ENCODE measurements at regions of chrX and their contacts with region 1.

Region 1: DNA sequence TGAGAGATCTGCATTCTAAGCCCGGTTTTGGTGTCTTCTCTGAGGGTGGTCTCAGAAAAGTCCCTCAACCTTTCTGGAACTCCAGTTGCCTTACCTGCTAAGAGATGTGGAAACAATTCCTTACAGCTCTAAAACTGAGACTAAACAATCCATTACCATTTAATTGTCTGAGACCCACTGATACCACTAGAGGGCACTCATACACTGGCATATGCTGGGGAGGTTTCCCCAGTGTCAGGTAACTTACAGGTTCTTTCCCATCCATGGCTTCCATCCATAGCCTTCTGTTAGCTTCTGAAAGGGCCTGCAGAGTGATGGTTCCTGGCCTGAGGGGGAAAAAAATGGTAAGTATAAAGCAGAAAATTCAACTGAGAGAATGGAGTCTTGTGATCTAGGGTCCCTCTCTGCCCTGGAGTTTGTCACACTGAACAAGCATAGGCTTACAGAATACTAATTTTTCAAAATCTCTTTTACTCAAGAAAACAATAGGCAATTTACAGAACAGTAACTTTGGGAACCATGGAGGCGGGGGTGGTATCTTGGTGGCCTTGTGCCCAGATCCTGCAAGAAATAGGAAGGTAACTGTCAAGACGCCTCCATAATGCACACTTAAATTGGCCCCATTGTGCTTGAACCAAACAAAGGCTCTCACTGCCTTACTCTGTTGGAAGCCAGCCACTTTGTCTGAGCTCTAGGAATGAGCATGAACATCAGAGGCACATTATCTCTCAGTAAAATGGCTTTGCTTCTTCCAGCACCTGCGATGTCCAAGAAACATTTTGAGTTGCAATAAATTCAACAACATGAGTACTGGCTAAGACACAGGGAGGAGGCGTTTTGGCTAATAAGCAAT is 236.1 kb downstream of the OPHN1 start:
- DNase-seq: peak; percentile 53
- H3K4me3 ChIP-seq: no peak overlapping the region
- H3K27ac ChIP-seq: no peak overlapping the region
- H3K4me1 ChIP-seq: peaks cover 15% of the 10 kb centered on the region
- H3K27me3 ChIP-seq: no peaks in the 10 kb centered on the region
- CTCF ChIP-seq: peak; percentile 37 to 57
- POLR2A ChIP-seq: no peak

Region 2: GRCh38 chrX:68183612-68184214 is 13.5 kb before region 1 on chrX:
- CTCF ChIA-PET with region 1: interaction called, 32 read pairs
- POLR2A ChIA-PET with region 1: no interaction called
- dilution Hi-C with region 1: no loop called
- intact Hi-C with region 1: no loop called
- DNase-seq: peak; percentile 44
- H3K4me3 ChIP-seq: no peak overlapping the region
- H3K27ac ChIP-seq: no peak overlapping the region
- H3K4me1 ChIP-seq: peaks cover 12% of the 10 kb centered on the region
- H3K27me3 ChIP-seq: no peaks in the 10 kb centered on the region
- CTCF ChIP-seq: peak; percentile 18 to 25
- POLR2A ChIP-seq: no peak

Region 3: DNA sequence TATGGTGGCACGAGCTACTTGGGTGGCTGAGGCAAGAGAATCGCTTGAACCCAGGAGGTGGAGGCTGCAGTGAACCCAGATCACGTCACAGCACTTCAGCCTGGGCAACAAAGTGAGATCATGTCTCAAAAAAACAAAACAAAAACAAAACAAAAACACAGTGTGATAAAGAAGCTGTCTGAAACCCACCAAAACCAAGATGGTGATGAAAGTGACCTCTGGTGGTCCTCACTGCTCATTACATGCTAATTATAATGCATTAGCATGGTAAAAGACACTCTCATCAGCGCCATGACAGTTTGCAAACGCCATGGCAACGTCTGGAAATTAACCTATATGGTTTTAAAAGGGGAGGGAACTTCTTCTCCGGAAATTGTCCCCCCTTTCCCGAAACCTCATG is 265.5 kb after region 1 on chrX:
- CTCF ChIA-PET with region 1: interaction called, 59 read pairs
- POLR2A ChIA-PET with region 1: no interaction called
- dilution Hi-C with region 1: no loop called
- intact Hi-C with region 1: loop called (anchors 1 kb)
- DNase-seq: peak; percentile 64
- H3K4me3 ChIP-seq: no peak overlapping the region
- H3K27ac ChIP-seq: peak overlapping the region; percentile 57
- H3K4me1 ChIP-seq: no peaks in the 10 kb centered on the region
- H3K27me3 ChIP-seq: no peaks in the 10 kb centered on the region
- CTCF ChIP-seq: peak in 1 of 2 donors; percentile 46
- POLR2A ChIP-seq: no peak

Region 4: DNA sequence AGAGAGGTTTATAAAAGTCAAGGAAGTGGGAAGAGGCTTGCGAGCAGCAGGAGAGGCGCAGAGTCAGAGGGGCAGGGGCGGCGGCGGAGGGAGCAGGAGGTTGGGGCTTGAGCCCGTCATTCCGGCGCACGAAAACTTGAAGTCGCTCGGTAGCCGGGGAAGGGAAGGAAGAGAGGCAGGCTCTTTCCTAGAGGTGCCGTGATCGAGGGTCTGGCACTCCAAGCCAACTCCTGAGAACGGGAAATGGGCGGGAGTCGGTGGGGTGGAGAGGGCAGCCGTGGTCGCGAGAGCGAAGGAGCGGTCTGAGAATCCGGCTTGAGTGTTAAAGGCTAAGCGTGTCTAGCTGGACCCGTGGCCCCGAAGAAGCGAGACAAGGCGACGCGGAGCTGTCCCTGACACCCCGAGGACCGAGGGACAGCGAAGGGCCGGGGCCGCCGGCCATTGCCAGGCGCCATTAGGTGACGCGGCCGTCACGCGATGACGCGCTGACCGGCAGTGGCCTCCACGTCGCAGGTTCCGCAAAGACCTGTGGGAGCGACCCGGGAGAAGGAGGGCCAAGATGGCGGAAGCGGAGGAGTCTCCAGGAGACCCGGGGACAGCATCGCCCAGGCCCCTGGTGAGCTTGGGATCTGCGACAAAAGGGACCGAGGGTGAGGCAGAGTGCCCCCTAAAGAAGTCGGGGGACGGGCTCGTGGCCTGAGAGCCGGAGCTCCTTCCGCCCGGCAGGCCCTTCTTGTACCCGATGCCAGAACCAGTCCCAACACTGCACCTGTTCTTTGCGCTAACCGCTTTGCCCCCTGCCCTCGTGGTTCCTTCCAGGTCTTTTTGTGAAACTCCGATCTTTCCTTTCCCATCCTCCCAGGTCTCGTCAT is 301.6 kb after region 1 on chrX and contains the start of gene YIPF6:
- CTCF ChIA-PET with region 1: interaction called, 14 read pairs
- POLR2A ChIA-PET with region 1: no interaction called
- dilution Hi-C with region 1: no loop called
- intact Hi-C with region 1: no loop called
- DNase-seq: peak; percentile 71
- H3K4me3 ChIP-seq: peak within 1 kb of the TSS; percentile 67 to 95 (median 80)
- H3K27ac ChIP-seq: peak within 1 kb of the TSS; percentile 96
- H3K4me1 ChIP-seq: peaks cover 5% of the 10 kb centered on the region
- H3K27me3 ChIP-seq: no peaks in the 10 kb centered on the region
- CTCF ChIP-seq: no peak
- POLR2A ChIP-seq: peak; percentile 96
- total RNA-seq, gene YIPF6: 28.5 and 29.6 TPM in 2 replicates

Region 5: DNA sequence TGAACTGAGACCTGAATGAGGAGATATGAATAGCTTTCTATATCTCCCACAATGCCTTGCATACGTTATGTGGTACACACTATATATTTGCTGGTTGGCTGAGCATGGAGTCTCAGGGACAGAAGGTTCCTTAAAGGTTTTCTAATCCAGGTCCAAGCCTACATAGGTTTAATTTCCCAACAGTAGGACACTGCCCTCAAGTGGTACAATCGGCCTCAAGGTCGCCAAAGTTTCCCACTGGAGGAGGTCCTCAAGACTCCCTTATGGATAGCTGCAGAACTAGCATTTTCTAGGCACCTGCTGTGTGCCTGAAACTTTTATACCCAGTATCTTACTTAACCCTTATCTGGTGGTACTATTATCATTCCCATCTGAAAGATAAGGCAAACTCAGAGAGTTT is 610.7 kb after region 1 on chrX:
- CTCF ChIA-PET with region 1: interaction called, 9 read pairs
- POLR2A ChIA-PET with region 1: no interaction called
- dilution Hi-C with region 1: no loop called
- intact Hi-C with region 1: loop called (anchors 5 kb)
- DNase-seq: peak; percentile 35
- H3K4me3 ChIP-seq: no peak overlapping the region
- H3K27ac ChIP-seq: no peak overlapping the region
- H3K4me1 ChIP-seq: no peaks in the 10 kb centered on the region
- H3K27me3 ChIP-seq: peaks cover 1 to 2% of the 10 kb centered on the region in 2 experiments
- CTCF ChIP-seq: peak; percentile 10 to 27
- POLR2A ChIP-seq: no peak